ENCODE measurements at regions of chr2 and their contacts with region 1.

Region 1: GRCh38 chr2:74919827-74920226 is 38.6 kb upstream of the POLE4 start:
- DNase-seq: peak; percentile 49 to 81 (median 61)
- ATAC-seq: peak in 3 of 4 donors; percentile 42 to 67 (median 63)
- H3K4me3 ChIP-seq: peak overlapping the region in 7 of 12 donors; percentile 5 to 36 (median 29)
- H3K27ac ChIP-seq: no peak overlapping the region
- H3K4me1 ChIP-seq: peaks cover 0 to 21% (median 1%) of the 10 kb centered on the region in 12 donors
- H3K27me3 ChIP-seq: peaks cover 0 to 24% (median 0%) of the 10 kb centered on the region in 9 donors
- CTCF ChIP-seq: peak; percentile 78 to 94 (median 86)
- POLR2A ChIP-seq: no peak

Region 2: GRCh38 chr2:75053484-75054112 is 133.8 kb after region 1 on chr2:
- intact Hi-C with region 1: loop called in 2 of 10 experiments (anchors 10 kb)
- DNase-seq: peak in 1 of 5 donors; percentile 35
- ATAC-seq: peak in 3 of 4 donors; percentile 44 to 57 (median 46)
- H3K4me3 ChIP-seq: no peak overlapping the region
- H3K27ac ChIP-seq: no peak overlapping the region
- H3K4me1 ChIP-seq: peaks cover 0 to 2% (median 0%) of the 10 kb centered on the region in 12 donors
- H3K27me3 ChIP-seq: no peaks in the 10 kb centered on the region
- CTCF ChIP-seq: peak; percentile 26 to 45 (median 38)
- POLR2A ChIP-seq: no peak

Region 3: DNA sequence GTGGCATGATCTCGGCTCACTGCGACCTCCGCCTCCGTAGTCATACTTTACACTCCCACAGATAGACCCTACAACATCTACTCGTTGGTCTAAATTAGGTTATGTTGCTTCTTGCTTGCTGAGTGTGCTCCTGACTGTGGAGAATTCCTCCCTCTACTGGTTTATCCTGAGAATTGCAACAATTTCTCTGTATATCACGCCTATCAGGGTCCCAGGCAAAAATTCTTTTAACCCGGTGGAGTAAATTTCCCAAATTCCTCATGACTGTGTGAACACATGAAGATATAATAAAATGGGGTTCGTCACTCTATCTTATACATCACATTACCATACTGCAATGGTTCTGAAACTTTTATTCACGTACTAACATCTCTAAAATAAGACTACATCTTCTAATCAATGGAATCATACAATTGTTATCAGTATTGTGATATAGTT is 484.2 kb after region 1 on chr2:
- intact Hi-C with region 1: loop called (anchors 1 to 5 kb)
- DNase-seq: no peak
- ATAC-seq: peak in 3 of 4 donors; percentile 50 to 67 (median 63)
- H3K4me3 ChIP-seq: no peak overlapping the region
- H3K27ac ChIP-seq: no peak overlapping the region
- H3K4me1 ChIP-seq: no peaks in the 10 kb centered on the region
- H3K27me3 ChIP-seq: peaks cover 0 to 30% (median 4%) of the 10 kb centered on the region in 9 donors
- CTCF ChIP-seq: peak; percentile 65 to 88 (median 77)
- POLR2A ChIP-seq: no peak

Region 4: GRCh38 chr2:75614056-75614710 is 694.4 kb after region 1 on chr2:
- intact Hi-C with region 1: loop called in 5 of 10 experiments (anchors 5 to 10 kb)
- DNase-seq: no peak
- ATAC-seq: no peak
- H3K4me3 ChIP-seq: no peak overlapping the region
- H3K27ac ChIP-seq: no peak overlapping the region
- H3K4me1 ChIP-seq: no peaks in the 10 kb centered on the region
- H3K27me3 ChIP-seq: peaks cover 0 to 14% (median 3%) of the 10 kb centered on the region in 9 donors
- CTCF ChIP-seq: no peak
- POLR2A ChIP-seq: no peak

Region 5: GRCh38 chr2:75627895-75628504 is 708.2 kb after region 1 on chr2:
- intact Hi-C with region 1: loop called in 1 of 10 experiments (anchors 10 kb)
- DNase-seq: peak; percentile 52 to 70 (median 67)
- ATAC-seq: peak in 3 of 4 donors; percentile 45 to 79 (median 77)
- H3K4me3 ChIP-seq: no peak overlapping the region
- H3K27ac ChIP-seq: no peak overlapping the region
- H3K4me1 ChIP-seq: peaks cover 0 to 8% (median 0%) of the 10 kb centered on the region in 12 donors
- H3K27me3 ChIP-seq: peaks cover 0 to 3% (median 0%) of the 10 kb centered on the region in 9 donors
- CTCF ChIP-seq: peak; percentile 77 to 94 (median 83)
- POLR2A ChIP-seq: no peak

Measured in heart left ventricle (tissue), 16 donors.